ENCODE measurements at regions of chr5 and their contacts with region 1.

Region 1: GRCh38 chr5:154754460-154755360 is 467 bp upstream of the LARP1 start:
- H3K4me3 Mint-ChIP-seq: peak overlapping the region; percentile 95
- H3K27ac Mint-ChIP-seq: peak overlapping the region; percentile 96
- H3K4me1 Mint-ChIP-seq: peaks cover 45% of the 10 kb centered on the region
- H3K27me3 Mint-ChIP-seq: no peaks in the 10 kb centered on the region

Region 2: DNA sequence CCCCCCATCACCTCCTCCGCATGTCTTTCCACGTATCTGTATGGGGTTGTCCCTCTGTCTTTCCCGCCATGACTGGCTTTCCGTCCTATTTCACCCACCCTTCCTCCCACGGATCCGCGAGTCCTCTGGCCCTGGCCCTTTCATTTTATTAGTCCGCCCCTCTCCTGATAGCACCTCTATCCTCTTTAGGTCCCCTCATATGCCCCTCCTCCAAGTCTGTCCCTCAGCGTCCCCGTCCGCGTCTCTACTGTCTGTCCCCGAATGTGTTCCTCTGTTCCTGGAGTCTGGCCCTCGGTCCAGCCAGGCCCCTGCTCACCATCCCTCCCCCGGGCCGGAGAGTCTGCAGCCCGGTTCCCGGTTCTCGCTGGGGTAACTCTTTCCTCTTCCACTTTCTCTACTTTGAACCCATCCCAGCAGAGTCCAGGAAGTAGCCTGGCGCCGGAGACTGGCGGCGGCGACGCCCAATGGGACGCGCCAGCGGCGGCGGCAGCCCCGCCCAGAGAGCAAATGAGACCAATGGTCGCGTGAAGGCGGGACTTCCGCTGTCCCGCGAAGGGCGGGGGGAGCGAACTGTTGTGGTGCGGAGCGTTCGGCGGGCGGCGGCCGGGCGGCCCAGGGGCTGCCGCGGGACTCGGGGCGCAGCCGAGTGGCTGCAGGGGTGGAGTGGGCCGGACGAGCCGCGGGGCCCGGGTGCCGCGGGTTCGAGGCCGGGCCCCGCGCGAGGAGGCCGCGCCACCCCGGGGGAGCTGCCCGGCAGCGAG is 309.1 kb before region 1 on chr5 and contains the start of gene SAP30L:
- intact Hi-C with region 1: loop called (anchors 10 kb)
- H3K4me3 Mint-ChIP-seq: peak within 1 kb of the TSS; percentile 95
- H3K27ac Mint-ChIP-seq: peak within 1 kb of the TSS; percentile 90
- H3K4me1 Mint-ChIP-seq: peaks cover 36% of the 10 kb centered on the region
- H3K27me3 Mint-ChIP-seq: no peaks in the 10 kb centered on the region

Region 3: GRCh38 chr5:154575546-154576428 is 178.9 kb before region 1 on chr5:
- intact Hi-C with region 1: no loop called
- H3K4me3 Mint-ChIP-seq: no peak overlapping the region
- H3K27ac Mint-ChIP-seq: no peak overlapping the region
- H3K4me1 Mint-ChIP-seq: peaks cover 14% of the 10 kb centered on the region
- H3K27me3 Mint-ChIP-seq: peaks cover 12% of the 10 kb centered on the region

Region 4: DNA sequence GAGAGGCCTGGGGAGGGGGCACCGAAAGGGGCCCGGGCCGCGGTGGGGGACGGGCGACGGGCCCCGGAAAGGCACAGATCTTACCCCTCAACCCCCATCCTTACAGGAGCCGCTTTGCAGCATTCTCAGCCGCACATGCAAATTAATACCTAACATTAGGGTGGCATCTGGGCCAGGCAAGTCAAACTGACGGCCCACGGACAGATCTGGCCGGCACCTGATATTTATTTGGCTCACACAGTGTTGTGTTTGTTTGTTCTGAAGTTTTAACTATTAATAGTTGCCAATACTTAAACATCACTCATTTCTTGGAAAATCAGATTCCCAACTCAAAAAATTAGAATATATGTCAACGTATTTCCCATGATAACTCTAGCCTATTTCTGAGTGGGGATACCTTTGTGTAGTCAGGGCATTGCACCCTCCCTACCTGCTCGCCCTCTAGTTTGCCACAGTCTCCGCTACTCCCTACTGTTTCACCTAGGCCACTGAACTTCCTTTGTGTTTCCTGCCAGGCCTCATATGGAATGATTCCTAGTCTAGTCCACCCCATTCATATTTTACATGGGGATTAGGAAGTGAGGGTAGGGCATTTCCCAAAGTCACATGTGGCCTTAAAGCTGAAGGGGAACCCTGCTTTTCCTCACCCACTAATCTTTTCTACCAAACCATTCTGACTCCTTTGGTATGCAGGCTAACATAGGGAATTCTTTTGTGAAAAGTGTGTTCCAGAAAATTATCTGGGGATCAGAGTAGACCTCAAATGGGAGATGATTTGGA is 71.4 kb before region 1 on chr5:
- intact Hi-C with region 1: loop called (anchors 2 kb)
- H3K4me3 Mint-ChIP-seq: peak overlapping the region; percentile 84
- H3K27ac Mint-ChIP-seq: peak overlapping the region; percentile 94
- H3K4me1 Mint-ChIP-seq: peaks cover 37% of the 10 kb centered on the region
- H3K27me3 Mint-ChIP-seq: no peaks in the 10 kb centered on the region

Region 5: DNA sequence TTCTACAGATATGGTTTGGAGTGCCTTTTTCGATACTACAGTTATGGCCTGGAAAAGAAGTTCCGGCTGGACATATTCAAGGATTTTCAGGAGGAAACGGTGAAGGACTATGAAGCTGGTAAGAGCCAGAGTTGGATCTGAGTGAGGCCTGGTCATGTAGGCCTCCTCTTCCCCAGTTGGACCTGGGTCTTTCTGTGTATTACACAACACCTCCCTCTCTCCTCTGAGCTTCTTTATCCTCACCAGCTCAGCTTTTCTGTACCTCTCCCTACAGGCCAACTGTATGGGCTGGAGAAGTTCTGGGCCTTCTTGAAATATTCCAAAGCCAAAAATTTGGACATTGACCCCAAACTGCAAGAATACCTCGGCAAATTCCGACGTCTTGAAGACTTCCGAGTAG is 56.5 kb after region 1 on chr5:
- intact Hi-C with region 1: no loop called
- H3K4me3 Mint-ChIP-seq: no peak overlapping the region
- H3K27ac Mint-ChIP-seq: no peak overlapping the region
- H3K4me1 Mint-ChIP-seq: peaks cover 24% of the 10 kb centered on the region
- H3K27me3 Mint-ChIP-seq: no peaks in the 10 kb centered on the region

Region 6: DNA sequence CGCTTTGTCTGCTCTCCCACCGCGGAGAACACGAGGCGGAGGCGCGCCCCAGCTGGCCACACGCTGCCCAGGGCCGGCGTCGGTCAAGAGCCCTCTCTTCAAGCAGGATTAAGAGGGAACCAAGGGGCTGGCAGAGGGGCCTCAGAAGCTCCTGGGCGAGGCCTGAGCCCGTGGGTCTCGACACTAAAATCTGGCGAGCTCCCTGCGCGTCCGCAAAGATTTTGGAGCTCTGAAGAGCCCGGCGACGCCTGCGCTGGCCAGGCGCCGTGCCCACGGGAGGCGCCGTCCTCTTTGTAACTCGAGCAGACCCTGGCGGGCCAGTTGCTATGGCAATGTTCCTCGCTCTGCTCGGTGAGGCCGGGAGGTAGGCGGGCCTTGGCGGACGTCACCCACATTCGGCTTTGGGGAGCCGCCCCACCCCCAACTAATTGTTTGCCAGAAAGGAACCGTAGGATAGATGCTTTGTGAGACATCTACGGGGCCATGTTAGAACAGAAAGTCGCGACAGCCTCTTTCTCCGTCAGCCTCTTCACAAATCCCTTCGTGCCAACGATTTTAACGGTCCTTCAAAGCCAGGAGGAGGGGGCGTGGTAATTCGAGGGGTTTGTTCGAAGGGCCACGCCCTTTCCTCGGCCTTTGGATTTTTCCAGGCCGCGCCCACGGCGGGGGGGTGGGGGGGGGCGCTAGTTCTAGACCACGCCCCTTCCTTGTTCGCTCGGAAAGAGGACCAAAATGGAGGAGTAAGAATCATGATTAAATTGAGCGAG is 103.0 kb after region 1 on chr5:
- intact Hi-C with region 1: loop called (anchors 1 kb)
- H3K4me3 Mint-ChIP-seq: peak overlapping the region; percentile 99
- H3K27ac Mint-ChIP-seq: peak overlapping the region; percentile 98
- H3K4me1 Mint-ChIP-seq: peaks cover 42% of the 10 kb centered on the region
- H3K27me3 Mint-ChIP-seq: no peaks in the 10 kb centered on the region